ENCODE measurements at regions of chr11 and their contacts with region 1.

Region 1: DNA sequence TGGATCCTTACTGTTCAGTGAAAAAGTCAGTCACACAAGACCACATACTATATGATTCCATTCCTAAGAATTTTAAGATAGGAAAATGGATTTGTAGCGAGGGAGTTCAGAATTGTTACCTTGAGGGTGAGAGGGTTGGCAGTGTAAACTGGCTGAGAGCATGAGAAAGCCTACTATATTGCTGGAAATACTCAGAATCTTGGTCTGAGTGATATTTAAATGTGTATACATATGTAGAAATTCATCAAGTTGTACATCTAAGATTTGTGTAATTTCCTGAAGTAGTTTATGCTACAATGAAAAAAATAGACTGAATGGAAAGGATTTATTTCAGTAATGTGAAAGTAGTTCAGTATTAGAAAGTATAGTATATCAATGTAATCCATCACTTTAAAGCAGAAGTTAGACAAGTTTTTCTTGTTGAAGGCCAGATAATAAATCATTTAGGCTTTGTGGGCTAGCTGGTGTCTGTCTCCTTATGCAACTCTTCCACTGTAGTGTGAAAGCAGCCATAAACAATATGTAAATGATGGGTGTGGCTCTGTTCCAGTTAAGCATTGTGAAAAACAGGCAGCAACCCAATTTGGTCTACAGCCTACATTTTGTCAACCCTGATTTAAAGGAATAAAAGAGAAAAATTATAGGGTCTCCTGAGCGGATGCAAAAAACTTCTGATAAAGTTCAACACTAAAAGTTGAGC is 127.2 kb upstream of the THY1 start:
- DNase-seq: no peak
- H3K4me3 ChIP-seq: no peak overlapping the region
- H3K27ac ChIP-seq: no peak overlapping the region
- H3K27me3 ChIP-seq: no peaks in the 10 kb centered on the region
- CTCF ChIP-seq: no peak

Region 2: GRCh38 chr11:119347242-119347641 is 203.0 kb before region 1 on chr11:
- CTCF ChIA-PET with region 1: no interaction called
- POLR2A ChIA-PET with region 1: no interaction called
- DNase-seq: no peak
- H3K4me3 ChIP-seq: no peak overlapping the region
- H3K27ac ChIP-seq: no peak overlapping the region
- H3K27me3 ChIP-seq: peaks cover 56% of the 10 kb centered on the region
- CTCF ChIP-seq: no peak

Region 3: DNA sequence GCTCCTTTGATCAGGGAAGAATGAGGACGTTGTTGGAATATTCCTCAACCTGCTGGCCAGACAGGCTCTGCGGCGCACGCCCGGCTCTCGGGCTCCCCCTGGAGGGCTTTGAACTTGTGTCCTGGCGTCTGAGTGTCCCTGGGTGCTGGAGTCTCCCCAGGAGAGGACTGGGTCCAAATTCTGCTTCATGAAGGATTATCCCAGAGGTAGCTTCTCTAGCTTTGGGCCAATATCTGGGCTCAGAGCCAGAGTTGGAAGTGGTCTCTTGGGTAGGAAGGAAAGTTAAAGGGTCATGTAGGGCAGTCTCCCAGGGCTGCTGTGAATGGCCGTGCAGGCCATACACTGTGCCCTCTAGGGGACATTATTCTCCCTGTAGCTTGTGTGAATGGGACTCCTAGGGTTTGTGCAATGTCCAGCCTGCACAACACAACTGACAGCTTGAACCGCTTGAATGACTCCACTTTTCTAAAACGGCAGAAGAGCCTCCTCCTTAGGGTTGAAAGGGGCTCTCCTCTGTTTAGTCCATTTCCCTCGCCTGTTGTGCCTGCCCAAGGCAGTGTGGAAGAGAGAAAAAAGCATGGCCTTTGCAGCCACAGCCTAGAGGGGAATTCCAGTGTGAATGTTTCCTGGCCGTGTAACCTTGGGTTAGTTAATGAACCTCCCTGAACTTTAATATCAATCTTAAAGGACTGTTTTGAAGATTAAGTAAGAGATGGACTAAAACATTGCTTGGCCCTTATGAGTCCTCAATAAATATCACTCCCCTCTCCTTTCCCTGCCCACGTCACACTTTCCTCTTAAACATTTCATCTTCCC is 16.1 kb before region 1 on chr11:
- CTCF ChIA-PET with region 1: interaction called, 18 read pairs
- POLR2A ChIA-PET with region 1: no interaction called
- DNase-seq: peak; percentile 2
- H3K4me3 ChIP-seq: no peak overlapping the region
- H3K27ac ChIP-seq: no peak overlapping the region
- H3K27me3 ChIP-seq: peaks cover 46% of the 10 kb centered on the region
- CTCF ChIP-seq: peak; percentile 94

Region 4: DNA sequence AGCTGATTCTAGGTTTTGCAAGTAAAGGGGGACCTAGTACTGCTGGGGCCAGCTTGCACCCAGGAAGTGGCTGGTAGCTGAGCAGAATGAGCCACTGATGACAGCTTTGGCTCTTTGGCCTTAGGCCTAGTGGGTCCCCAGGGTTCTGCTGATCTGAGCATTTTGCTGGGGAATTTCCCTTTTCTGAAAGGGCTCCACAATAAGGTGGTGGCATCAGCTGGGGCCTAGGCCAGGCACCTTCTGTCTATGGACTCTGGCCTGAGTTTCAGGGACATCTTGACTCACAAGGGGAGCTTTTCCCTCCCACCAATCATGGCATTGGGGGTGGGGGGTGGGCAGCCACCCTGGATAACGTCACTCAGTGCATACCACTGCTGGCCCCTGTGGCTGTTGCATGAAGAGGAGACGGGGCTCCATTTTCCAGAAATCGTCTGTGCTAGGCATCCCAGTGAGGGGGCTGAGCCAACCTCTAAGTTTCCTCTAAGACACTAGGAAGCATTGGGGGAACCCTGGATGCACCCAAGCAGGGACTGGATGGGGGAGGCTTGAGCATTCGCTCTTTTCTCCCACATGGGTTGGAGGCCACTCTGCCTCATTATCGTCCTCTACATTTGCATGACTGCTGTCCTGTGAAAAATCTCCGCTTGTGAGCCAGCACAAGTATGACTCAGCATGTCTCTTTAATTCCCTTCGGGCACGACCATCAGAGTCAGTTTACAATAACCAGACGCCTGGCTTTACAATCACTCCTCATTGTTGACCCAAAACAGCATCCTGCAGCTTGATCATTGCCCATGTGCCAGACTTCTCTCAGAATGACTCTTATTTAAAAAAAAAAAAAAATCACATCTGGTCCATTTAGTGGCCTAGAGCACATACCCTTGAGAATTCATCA is 17.7 kb after region 1 on chr11:
- CTCF ChIA-PET with region 1: no interaction called
- POLR2A ChIA-PET with region 1: no interaction called
- DNase-seq: peak; percentile 36
- H3K4me3 ChIP-seq: no peak overlapping the region
- H3K27ac ChIP-seq: no peak overlapping the region
- H3K27me3 ChIP-seq: peaks cover 9% of the 10 kb centered on the region
- CTCF ChIP-seq: no peak